ENCODE measurements at regions of chr11 and their contacts with region 1.

Region 1: GRCh38 chr11:14974515-14975251 is 2.5 kb upstream of the CALCA start:
- DNase-seq: peak; percentile 83
- H3K4me3 Mint-ChIP-seq: peak overlapping the region; percentile 69
- H3K27ac Mint-ChIP-seq: no peak overlapping the region
- H3K4me1 Mint-ChIP-seq: peaks cover 33% of the 10 kb centered on the region
- H3K27me3 Mint-ChIP-seq: peaks cover 61% of the 10 kb centered on the region

Region 2: DNA sequence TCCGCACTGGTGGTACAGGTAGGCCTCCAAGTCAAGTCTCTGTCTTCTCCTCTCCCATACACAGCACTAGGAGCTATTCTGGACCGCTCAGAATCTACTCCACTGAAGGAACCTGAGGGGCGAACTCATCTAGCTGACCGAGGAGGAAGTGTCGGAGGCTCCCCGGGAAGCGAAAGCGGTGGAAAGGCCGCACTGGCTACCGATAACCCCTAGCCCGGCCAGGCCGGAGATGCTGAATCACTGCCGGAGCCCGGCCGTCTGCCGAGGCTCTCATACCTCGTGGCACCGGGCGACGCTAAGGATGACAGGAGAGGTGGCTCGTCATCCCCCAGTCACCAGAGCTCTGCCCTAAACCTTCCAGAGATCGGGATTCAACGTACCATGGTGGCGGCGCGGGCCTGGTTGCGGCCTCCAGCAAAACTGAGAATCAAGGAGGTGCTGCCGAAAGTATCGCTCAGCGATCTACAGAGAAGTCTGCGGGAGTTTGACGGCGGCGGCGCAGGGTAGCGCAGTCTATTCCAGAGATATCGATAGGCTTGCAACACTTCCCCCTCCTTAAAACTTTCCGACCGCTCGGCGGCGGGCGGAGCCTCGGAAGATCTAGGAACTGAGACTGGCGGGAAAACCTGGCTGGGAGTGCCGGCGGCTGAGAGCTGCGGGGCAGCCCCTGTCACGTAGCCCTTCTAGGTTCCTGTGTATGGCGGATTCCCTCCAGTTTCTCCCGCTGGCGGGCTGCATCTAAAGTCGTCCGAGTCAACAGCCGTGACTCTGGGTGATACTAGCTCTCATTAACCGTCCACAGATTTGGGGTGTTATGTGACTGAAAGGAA is 454.6 kb before region 1 on chr11 and contains the start of gene PSMA1:
- CTCF ChIA-PET with region 1: no interaction called
- intact Hi-C with region 1: loop called (anchors 5 kb)
- DNase-seq: peak; percentile 98
- H3K4me3 Mint-ChIP-seq: peak within 1 kb of the TSS; percentile 96
- H3K27ac Mint-ChIP-seq: peak within 1 kb of the TSS; percentile 97
- H3K4me1 Mint-ChIP-seq: peaks cover 24% of the 10 kb centered on the region
- H3K27me3 Mint-ChIP-seq: no peaks in the 10 kb centered on the region
- total RNA-seq, gene PSMA1: 367 to 375 TPM

Region 3: DNA sequence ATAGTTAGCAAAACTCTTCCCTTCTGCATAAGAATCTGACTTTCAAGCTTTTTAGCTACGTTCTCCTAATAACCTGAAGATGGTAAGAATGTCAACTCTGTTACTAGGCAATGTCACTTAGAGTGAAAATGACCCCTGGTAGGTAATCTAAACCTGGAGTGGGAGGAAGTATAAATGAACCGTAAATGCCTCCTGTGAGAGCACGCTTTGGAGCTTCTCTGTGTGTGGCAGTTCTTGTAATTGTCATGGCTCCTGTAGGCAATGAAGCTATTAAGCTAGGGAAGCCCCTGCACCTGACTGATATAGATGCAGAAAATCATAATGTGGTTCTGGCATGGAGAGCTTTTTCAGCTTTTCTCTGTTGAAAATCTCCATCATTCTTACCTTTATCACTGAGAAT is 31.9 kb before region 1 on chr11:
- CTCF ChIA-PET with region 1: interaction called, 11 read pairs
- intact Hi-C with region 1: no loop called
- DNase-seq: no peak
- H3K4me3 Mint-ChIP-seq: no peak overlapping the region
- H3K27ac Mint-ChIP-seq: no peak overlapping the region
- H3K4me1 Mint-ChIP-seq: no peaks in the 10 kb centered on the region
- H3K27me3 Mint-ChIP-seq: no peaks in the 10 kb centered on the region

Region 4: GRCh38 chr11:15006139-15006759 is 31.6 kb after region 1 on chr11:
- CTCF ChIA-PET with region 1: interaction called, 51 read pairs
- intact Hi-C with region 1: loop called (anchors 1 kb)
- DNase-seq: peak; percentile 10
- H3K4me3 Mint-ChIP-seq: no peak overlapping the region
- H3K27ac Mint-ChIP-seq: no peak overlapping the region
- H3K4me1 Mint-ChIP-seq: no peaks in the 10 kb centered on the region
- H3K27me3 Mint-ChIP-seq: peaks cover 27% of the 10 kb centered on the region

Region 5: GRCh38 chr11:15208378-15209222 is 233.9 kb after region 1 on chr11:
- CTCF ChIA-PET with region 1: interaction called, 4 read pairs
- intact Hi-C with region 1: loop called (anchors 1 kb)
- DNase-seq: peak; percentile 84
- H3K4me3 Mint-ChIP-seq: no peak overlapping the region
- H3K27ac Mint-ChIP-seq: no peak overlapping the region
- H3K4me1 Mint-ChIP-seq: no peaks in the 10 kb centered on the region
- H3K27me3 Mint-ChIP-seq: no peaks in the 10 kb centered on the region